Mammary epithelial cell (primary cell): ENCODE measurements at regions of chr5 and their contacts with region 1.

Region 1: GRCh38 chr5:91101600-91102379 is 281.3 kb downstream of the ARRDC3 start:
- DNase-seq: peak; percentile 61
- H3K4me3 ChIP-seq: no peak overlapping the region
- H3K27ac ChIP-seq: no peak overlapping the region
- H3K4me1 ChIP-seq: no peaks in the 10 kb centered on the region
- H3K27me3 ChIP-seq: no peaks in the 10 kb centered on the region
- CTCF ChIP-seq: peak; percentile 68 to 87

Region 2: DNA sequence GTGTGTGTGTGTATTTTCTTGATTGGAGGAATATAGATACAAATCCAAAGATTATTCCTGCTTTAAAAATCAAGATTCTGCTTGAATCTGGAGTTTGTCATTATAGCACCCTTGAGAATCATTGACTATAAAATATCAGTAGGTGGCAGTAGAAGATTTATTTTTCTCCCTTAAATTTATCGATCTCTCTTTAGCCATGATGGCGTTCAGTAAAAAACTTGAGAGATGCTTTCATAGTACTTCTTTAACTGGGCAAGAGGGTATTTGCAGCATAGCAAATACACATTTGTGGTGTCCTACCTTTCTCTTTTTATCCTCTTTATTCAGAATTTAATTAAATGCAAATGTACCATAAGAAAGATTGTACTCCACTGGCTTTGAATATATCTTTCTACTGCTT is 235.5 kb before region 1 on chr5:
- CTCF ChIA-PET with region 1: no interaction called
- dilution Hi-C with region 1: no loop called
- in situ Hi-C with region 1: no loop called
- intact Hi-C with region 1: loop called (anchors 2 kb)
- DNase-seq: no peak
- H3K4me3 ChIP-seq: no peak overlapping the region
- H3K27ac ChIP-seq: no peak overlapping the region
- H3K4me1 ChIP-seq: no peaks in the 10 kb centered on the region
- H3K27me3 ChIP-seq: no peaks in the 10 kb centered on the region
- CTCF ChIP-seq: peak; percentile 41 to 48

Region 3: GRCh38 chr5:90932052-90932699 is 169.6 kb before region 1 on chr5:
- CTCF ChIA-PET with region 1: no interaction called
- dilution Hi-C with region 1: no loop called
- in situ Hi-C with region 1: loop called in 1 of 2 experiments (anchors 25 kb)
- intact Hi-C with region 1: loop called (anchors 1 kb)
- DNase-seq: peak; percentile 56
- H3K4me3 ChIP-seq: no peak overlapping the region
- H3K27ac ChIP-seq: no peak overlapping the region
- H3K4me1 ChIP-seq: no peaks in the 10 kb centered on the region
- H3K27me3 ChIP-seq: no peaks in the 10 kb centered on the region
- CTCF ChIP-seq: peak; percentile 73 to 84

Region 4: GRCh38 chr5:91225848-91226686 is 124.3 kb after region 1 on chr5:
- CTCF ChIA-PET with region 1: no interaction called
- dilution Hi-C with region 1: no loop called
- in situ Hi-C with region 1: loop called (anchors 10 kb)
- intact Hi-C with region 1: loop called (anchors 1 kb)
- DNase-seq: peak; percentile 46
- H3K4me3 ChIP-seq: no peak overlapping the region
- H3K27ac ChIP-seq: no peak overlapping the region
- H3K4me1 ChIP-seq: peaks cover 9% of the 10 kb centered on the region
- H3K27me3 ChIP-seq: no peaks in the 10 kb centered on the region
- CTCF ChIP-seq: peak; percentile 47 to 69

Region 5: DNA sequence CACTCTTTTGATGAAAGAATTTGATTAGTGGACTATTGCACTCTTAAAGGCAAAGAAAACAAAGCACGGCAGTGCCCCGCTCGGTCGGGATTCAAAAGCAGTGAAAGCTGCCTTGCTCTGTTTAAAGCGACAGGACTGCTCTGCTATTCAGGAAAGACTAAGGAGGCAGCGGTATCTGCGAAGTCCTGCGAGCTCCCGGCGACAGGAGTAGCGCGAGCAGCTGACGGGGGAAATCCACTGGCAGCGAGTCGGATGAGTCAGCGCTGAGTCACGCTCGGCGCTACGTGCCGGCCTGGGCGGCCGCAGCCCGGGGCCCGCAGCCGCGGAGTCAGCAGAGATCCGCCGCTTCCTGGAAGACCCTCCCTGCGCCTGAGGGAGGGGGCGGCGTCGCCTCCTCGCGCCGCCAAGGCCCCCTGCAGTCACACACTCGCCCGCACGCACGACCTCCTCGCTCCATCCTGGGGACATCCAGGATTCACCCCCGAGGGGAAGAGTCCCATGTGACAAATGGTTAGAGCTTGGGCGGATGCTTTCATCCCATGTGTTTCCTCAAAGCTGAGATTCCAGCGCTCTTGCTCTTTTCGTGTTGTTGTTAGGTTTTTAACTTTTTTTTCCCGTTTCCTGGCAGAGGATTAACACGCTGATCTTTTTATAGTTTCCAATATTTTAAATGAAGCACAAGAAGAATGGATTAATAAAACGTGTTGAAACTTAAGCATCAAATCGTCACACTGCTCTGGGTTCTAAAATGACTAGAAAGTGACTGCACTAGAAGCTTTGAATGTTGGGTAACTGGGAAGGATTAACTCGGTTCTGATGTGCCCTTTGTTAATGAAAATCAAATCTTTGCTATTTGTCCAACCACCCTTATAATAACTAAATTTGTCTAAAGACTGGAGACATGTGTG is 178.8 kb after region 1 on chr5:
- CTCF ChIA-PET with region 1: no interaction called
- dilution Hi-C with region 1: no loop called
- in situ Hi-C with region 1: no loop called
- intact Hi-C with region 1: loop called (anchors 2 kb)
- DNase-seq: peak; percentile 96
- H3K4me3 ChIP-seq: peak overlapping the region; percentile 47 to 66 (median 59)
- H3K27ac ChIP-seq: peak overlapping the region; percentile 98
- H3K4me1 ChIP-seq: peaks cover 31% of the 10 kb centered on the region
- H3K27me3 ChIP-seq: no peaks in the 10 kb centered on the region
- CTCF ChIP-seq: no peak

Region 6: DNA sequence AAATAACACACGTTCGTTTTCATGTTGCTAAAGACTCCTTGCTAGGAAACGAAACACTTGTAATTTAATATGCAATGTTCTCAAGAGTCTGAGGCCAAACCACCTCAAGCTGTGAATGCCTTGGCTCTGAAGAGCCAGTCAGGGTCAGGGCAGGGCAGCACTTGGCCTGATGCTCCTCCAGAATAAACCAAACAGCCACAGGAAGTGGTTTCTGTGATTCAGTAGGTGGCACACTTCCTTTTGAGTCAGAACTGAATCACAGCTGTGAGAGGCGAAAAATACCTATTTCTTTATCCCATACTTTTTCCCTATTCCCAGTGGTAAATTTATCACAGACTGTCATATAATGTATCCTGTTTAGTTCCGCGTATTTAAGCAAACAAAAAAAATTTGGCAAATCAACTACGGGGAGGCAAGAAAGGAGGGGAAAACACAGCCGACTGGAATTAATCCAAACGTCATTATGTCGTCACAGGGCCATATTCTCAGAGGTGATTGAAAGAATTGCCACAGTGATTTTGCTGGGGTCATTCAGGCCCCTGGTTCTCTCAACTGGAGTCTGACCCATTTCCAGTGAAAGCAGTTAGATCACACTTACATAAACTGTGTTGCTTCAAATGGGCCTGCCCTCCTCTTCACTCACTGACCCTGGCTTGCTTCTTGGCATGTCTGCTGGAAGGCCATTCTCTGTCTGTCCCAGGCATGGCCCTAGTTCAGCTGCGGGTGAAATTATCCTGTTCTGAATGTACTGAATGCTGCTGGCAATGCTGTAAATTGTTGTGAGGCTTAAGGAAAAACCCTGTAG is 210.1 kb after region 1 on chr5:
- CTCF ChIA-PET with region 1: no interaction called
- dilution Hi-C with region 1: no loop called
- in situ Hi-C with region 1: no loop called
- intact Hi-C with region 1: loop called (anchors 10 kb)
- DNase-seq: peak; percentile 97
- H3K4me3 ChIP-seq: no peak overlapping the region
- H3K27ac ChIP-seq: peak overlapping the region; percentile 91
- H3K4me1 ChIP-seq: peaks cover 45% of the 10 kb centered on the region
- H3K27me3 ChIP-seq: no peaks in the 10 kb centered on the region
- CTCF ChIP-seq: no peak

Region 7: GRCh38 chr5:91419571-91420537 is 318.1 kb after region 1 on chr5:
- CTCF ChIA-PET with region 1: no interaction called
- dilution Hi-C with region 1: no loop called
- in situ Hi-C with region 1: no loop called
- intact Hi-C with region 1: loop called (anchors 1 kb)
- DNase-seq: peak; percentile 29
- H3K4me3 ChIP-seq: no peak overlapping the region
- H3K27ac ChIP-seq: no peak overlapping the region
- H3K4me1 ChIP-seq: no peaks in the 10 kb centered on the region
- H3K27me3 ChIP-seq: no peaks in the 10 kb centered on the region
- CTCF ChIP-seq: peak; percentile 32 to 54